Dorsolateral prefrontal cortex (tissue), 120 donors: ENCODE measurements at regions of chr16 and their contacts with region 1.

Region 1: DNA sequence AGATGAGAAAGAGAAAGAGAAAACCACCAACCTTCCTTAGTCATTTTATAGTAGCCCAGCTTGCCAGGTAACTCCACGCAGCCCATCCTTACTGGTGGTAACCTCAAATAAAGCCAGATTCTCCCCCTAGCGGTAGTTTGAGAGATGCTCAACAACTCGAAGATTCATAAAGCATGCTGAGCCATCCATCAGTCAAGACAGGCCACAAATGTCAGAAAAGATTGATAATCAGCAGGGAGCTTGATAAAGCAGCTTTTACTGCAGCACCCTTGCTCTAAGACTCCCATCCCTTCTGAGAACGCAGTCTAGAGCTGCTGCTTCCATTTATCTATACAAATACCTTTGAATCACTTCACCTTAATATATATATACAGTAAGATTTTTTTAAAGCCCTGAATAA is 451.5 kb upstream of the HSBP1 start:
- DNase-seq: peak in 3 of 10 donors; percentile 25 to 56 (median 50)
- H3K4me3 ChIP-seq: no peak overlapping the region
- H3K27ac ChIP-seq: peak overlapping the region in 1 of 59 donors; percentile 69
- H3K27me3 ChIP-seq: no peaks in the 10 kb centered on the region
- CTCF ChIP-seq: peak; percentile 43 to 77 (median 64)

Region 2: DNA sequence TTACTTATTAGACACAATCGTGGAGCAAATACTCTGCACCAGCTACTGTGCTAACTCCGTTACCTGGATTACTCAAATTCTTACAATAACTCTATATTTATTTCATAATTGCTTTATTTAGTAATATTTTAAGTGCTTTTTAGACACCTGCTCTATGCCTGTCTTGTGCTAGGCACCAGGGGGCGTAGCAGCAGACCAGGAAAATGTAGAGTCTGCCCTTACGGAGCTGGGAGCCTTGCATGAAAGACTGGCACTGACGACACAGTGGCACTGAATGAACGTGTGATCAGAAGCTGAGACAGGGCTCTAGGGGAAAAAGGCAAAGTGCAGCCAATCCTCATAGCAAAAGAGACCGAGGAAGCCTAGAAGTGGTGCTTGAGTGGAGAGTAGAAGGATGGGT is 242.9 kb before region 1 on chr16:
- intact Hi-C with region 1: loop called (anchors 10 kb)
- DNase-seq: peak; percentile 20 to 75 (median 61)
- H3K4me3 ChIP-seq: no peak overlapping the region
- H3K27ac ChIP-seq: no peak overlapping the region
- H3K27me3 ChIP-seq: peaks cover 0 to 6% (median 0%) of the 10 kb centered on the region in 45 donors
- CTCF ChIP-seq: peak; percentile 18 to 88 (median 72)

Region 3: DNA sequence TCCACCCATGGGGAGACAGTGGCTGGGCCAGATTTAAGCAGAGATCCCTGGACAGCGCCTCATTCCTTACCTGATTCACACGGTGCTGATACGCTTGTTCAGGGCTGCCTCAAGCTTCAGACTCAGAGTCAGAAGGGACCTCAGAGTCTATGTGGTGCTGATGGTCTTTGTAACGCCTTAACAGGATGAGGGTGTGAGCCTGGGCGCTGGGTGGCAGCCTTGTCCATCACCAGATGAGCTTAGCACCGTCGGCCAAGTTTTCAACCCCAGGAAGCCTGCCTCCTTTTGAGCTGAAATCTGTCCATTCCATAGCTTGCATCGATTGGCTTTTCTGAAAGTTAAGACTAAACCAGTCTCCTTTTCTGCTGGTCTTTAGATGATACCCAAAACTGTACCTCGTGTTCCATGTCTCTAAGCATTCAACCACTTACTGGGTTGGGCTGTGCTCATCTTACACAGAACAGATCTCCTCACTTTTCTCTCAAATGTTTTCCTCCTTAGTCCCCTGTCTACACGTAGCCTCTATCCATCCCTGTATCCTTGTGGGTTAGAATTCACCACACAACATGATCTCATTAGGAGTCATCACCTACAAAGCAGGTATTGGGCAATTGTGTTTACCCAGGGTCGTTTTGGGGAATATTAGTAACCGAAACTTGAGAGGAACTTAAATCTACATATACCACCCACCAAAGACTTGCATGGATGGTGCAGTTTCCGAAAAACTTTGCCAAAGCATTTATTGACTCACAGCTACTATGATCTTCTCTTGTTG is 156.1 kb before region 1 on chr16:
- intact Hi-C with region 1: loop called (anchors 2 to 5 kb)
- DNase-seq: peak; percentile 42 to 80 (median 55)
- H3K4me3 ChIP-seq: no peak overlapping the region
- H3K27ac ChIP-seq: peak overlapping the region in 1 of 59 donors; percentile 57
- H3K27me3 ChIP-seq: no peaks in the 10 kb centered on the region
- CTCF ChIP-seq: peak in 47 of 56 donors; percentile 6 to 78 (median 46)

Region 4: DNA sequence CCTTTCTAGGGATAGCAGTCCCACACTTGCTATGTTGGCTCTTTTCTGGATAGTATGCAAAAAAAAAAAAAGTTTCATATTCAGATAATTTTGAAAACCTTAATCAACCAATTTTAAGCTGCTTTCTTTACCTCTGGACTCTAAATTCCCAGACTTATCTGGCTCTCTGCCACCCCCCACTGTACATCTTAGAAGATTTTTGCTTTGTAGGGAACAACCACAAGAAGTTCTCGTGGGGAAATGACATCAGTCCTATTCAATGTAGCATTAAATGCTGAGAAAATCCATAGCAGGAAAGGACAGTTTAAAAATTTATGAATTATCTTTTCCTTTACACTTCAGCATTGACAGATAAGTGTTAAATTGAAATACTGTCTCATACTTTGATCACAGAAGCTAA is 111.2 kb before region 1 on chr16:
- intact Hi-C with region 1: loop called in 1 of 2 experiments (anchors 10 kb)
- DNase-seq: no peak
- H3K4me3 ChIP-seq: no peak overlapping the region
- H3K27ac ChIP-seq: no peak overlapping the region
- H3K27me3 ChIP-seq: no peaks in the 10 kb centered on the region
- CTCF ChIP-seq: no peak

Region 5: GRCh38 chr16:83513008-83513755 is 156.9 kb after region 1 on chr16:
- intact Hi-C with region 1: no loop called
- DNase-seq: no peak
- H3K4me3 ChIP-seq: no peak overlapping the region
- H3K27ac ChIP-seq: no peak overlapping the region
- H3K27me3 ChIP-seq: peaks cover 0 to 6% (median 0%) of the 10 kb centered on the region in 45 donors
- CTCF ChIP-seq: no peak